Activated CD4-positive, alpha-beta memory T cell treated with anti-CD3 and anti-CD28 coated beads, Interleukin-2, amount 10 ng/mL, durations not matched to agents 7 days and 5 days (primary cell): ENCODE measurements at regions of chr21 and their contacts with region 1.

Region 1: DNA sequence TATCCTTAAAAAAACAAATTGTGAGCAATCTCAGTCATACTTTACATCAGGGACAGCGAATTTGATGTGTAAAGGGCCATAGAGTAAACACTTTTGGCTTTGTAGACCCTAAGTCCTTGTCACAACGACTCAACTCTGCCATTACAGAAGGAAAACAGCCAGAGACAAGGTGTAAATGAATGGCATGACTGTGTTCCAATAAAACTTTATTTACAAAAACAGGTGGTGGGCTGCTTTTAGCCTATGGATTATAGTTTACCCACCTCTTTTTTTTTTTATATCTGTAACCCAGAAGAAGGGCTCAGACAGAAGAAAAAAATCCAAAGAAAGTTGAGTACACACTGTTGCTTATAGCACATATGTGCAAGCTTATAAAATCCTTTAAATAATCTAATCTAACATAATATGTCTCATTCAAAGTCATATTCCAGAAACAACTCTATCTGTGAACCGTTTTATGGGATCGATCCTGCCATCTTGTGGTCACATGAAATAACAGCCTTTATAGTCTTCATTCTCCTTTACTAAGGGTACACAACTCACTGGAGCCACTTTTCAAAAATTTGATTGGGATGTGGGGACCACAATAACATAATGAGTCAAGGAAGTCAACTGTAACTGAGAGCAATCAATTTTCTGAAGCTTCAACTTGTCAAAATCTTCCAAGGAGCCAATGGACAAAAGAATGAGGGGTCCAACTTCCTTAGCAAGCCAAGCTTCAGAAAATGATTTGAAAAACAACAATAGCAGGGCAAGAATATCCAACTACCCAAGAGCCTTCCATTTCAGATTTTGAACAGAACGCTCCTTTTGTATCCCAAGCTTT is 142.2 kb upstream of the KRTAP19-8 start:
- DNase-seq: no peak
- H3K4me3 Mint-ChIP-seq: peak overlapping the region; percentile 55
- H3K27ac Mint-ChIP-seq: peak overlapping the region; percentile 87
- H3K4me1 Mint-ChIP-seq: peaks cover 74% of the 10 kb centered on the region
- H3K27me3 Mint-ChIP-seq: no peaks in the 10 kb centered on the region

Region 2: DNA sequence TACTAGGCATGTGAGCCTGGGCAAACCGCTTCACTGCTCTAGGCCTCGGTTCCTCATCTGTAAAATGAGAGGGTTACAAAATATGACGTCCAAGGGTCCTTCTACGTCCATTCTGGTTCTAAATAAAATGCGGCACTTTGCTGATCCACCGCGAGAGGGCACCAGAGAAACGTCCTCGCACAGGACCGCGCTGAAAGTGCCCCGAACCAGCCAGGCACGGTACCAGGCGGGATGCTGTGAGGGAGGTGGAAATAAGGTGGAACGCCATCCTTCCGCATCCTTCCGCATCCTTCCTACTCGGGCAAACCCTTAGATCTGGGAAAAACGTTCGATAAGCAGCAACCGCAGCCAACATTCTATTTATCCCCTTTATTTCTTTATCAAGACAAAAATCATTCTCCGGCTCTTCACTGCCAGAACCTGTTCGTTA is 81.9 kb before region 1 on chr21:
- CTCF ChIA-PET with region 1: interaction called, 43 read pairs
- POLR2A ChIA-PET with region 1: interaction called, 5 read pairs
- DNase-seq: peak; percentile 75
- H3K4me3 Mint-ChIP-seq: no peak overlapping the region
- H3K27ac Mint-ChIP-seq: no peak overlapping the region
- H3K4me1 Mint-ChIP-seq: peaks cover 26% of the 10 kb centered on the region
- H3K27me3 Mint-ChIP-seq: peaks cover 13% of the 10 kb centered on the region

Region 3: DNA sequence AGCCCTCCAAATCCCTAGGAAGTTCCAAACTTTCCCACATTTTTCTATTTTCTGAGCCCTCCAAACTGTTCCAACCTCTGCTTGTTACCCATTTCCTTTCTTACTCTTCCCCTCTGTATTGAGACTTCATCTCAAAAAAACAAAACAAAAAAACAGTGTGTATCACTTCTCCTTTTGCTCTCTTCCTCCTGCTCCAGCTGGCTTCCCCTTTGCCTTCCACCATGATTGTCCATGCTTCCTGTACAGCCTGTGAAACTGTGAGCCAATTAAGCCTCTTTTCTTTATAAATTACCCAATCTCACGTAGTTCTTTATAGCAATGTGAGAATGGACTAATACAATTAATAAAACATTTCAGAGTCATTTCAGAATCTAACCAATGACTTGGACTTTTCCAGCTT is 72.6 kb before region 1 on chr21:
- CTCF ChIA-PET with region 1: interaction called, 29 read pairs
- POLR2A ChIA-PET with region 1: interaction called, 3 read pairs
- DNase-seq: no peak
- H3K4me3 Mint-ChIP-seq: no peak overlapping the region
- H3K27ac Mint-ChIP-seq: no peak overlapping the region
- H3K4me1 Mint-ChIP-seq: peaks cover 22% of the 10 kb centered on the region
- H3K27me3 Mint-ChIP-seq: no peaks in the 10 kb centered on the region

Region 4: DNA sequence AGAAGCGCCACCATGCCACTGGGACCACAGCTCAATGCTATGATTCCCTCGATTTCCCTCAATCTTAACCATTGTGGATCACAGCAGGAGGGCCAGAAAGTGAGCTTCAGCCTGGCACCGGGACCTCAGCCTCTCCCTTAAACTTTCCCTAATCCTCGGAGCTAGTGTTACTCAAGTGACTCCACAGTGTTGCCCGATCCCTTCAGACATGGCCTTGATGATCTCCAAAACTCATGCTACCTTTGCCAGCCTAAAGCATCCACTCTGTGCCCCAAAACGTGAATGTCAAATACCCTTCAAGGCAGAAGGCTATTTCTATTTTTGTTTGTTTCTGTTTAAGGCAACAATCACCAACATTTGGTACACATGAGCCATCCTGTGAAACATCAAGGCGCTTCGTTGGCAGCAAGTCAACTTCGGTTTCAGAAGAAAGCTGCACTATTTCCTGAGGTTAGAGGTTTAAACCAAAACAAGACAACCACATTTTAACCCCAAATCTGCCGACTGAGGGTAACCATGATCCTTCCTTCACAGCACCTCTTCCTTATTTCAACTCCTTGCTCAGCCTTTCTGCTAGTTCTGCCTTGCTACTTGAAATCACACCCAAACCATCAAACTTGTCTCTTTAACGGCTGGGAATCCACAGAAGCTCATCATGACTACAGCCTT is 47.8 kb before region 1 on chr21:
- CTCF ChIA-PET with region 1: interaction called, 14 read pairs
- POLR2A ChIA-PET with region 1: interaction called, 16 read pairs
- DNase-seq: peak; percentile 75
- H3K4me3 Mint-ChIP-seq: peak overlapping the region; percentile 66
- H3K27ac Mint-ChIP-seq: peak overlapping the region; percentile 93
- H3K4me1 Mint-ChIP-seq: peaks cover 56% of the 10 kb centered on the region
- H3K27me3 Mint-ChIP-seq: peaks cover 2% of the 10 kb centered on the region

Region 5: DNA sequence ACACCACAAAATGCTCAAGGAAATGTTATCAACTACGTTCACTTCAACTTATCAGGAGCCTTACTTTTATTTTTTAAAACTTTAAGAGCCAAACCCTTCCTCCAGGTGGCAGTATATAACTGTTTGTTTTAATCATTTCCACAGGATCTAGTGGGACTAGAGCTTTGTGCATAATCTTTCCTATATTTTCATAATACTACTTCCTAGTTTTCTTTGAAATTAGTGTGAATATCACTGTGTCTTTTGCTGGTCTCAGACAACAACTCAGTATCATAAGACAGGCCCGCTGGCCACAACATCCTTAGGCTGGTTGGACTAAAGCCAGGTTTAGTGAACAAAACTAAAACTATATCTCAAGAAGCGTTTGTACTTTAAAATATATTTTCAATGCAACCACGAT is 18.1 kb after region 1 on chr21:
- CTCF ChIA-PET with region 1: interaction called, 17 read pairs
- POLR2A ChIA-PET with region 1: interaction called, 10 read pairs
- DNase-seq: no peak
- H3K4me3 Mint-ChIP-seq: no peak overlapping the region
- H3K27ac Mint-ChIP-seq: no peak overlapping the region
- H3K4me1 Mint-ChIP-seq: peaks cover 39% of the 10 kb centered on the region
- H3K27me3 Mint-ChIP-seq: no peaks in the 10 kb centered on the region

Region 6: GRCh38 chr21:31558962-31559367 is 378.5 kb after region 1 on chr21:
- CTCF ChIA-PET with region 1: interaction called, 12 read pairs
- POLR2A ChIA-PET with region 1: interaction called, 10 read pairs
- DNase-seq: peak; percentile 93
- H3K4me3 Mint-ChIP-seq: peak overlapping the region; percentile 86
- H3K27ac Mint-ChIP-seq: no peak overlapping the region
- H3K4me1 Mint-ChIP-seq: peaks cover 45% of the 10 kb centered on the region
- H3K27me3 Mint-ChIP-seq: peaks cover 34% of the 10 kb centered on the region

Region 7: GRCh38 chr21:31580866-31581276 is 400.4 kb after region 1 on chr21:
- CTCF ChIA-PET with region 1: interaction called, 27 read pairs
- POLR2A ChIA-PET with region 1: no interaction called
- DNase-seq: peak; percentile 77
- H3K4me3 Mint-ChIP-seq: no peak overlapping the region
- H3K27ac Mint-ChIP-seq: no peak overlapping the region
- H3K4me1 Mint-ChIP-seq: peaks cover 3% of the 10 kb centered on the region
- H3K27me3 Mint-ChIP-seq: peaks cover 17% of the 10 kb centered on the region